ENCODE measurements at regions of chr6 and their contacts with region 1.

Region 1: DNA sequence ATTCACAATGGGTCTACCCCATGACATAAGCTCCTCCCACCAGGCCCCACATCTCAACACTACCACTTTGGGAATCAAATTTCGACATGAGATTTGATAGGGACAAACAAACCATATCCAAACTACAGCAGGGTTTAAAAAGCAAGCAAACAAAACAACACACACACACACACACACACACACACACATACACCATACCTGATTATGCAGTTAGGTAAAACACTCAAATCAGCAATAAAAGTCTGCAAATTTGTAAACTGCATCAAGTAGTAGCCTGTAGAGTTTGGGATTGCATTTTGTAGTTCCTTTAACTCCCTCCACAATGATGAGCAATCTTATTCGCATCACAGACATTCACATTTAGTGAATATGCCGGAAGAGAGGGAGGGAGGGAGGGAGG is 32.6 kb upstream of the TNFAIP3 start:
- DNase-seq: no peak

Region 2: DNA sequence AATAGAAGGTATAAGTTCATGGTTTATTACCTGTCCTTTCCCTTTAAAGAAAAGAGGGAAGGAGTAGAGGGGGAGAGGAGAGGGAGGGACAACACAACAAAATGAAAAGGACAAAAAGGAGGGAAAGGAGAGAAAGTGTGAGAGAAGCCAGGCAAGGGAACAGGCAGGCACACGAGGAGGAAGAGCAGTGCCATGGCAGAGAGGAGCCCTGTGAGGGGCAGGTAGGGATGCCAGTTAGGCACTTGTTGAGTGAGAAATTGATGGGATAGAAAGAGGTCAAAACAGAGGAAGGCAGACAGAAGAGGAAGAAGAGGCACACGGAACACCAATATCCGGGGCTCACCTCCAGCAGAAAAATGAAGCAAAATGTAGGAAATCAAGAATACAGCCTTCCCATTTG is 75.0 kb after region 1 on chr6:
- intact Hi-C with region 1: loop called in 1 of 2 experiments (anchors 2 kb)
- DNase-seq: no peak

Measured in posterior vena cava (tissue), 2 donors.